HepG2 (cell line): ENCODE measurements at regions of chr9 and their contacts with region 1.

Region 1: DNA sequence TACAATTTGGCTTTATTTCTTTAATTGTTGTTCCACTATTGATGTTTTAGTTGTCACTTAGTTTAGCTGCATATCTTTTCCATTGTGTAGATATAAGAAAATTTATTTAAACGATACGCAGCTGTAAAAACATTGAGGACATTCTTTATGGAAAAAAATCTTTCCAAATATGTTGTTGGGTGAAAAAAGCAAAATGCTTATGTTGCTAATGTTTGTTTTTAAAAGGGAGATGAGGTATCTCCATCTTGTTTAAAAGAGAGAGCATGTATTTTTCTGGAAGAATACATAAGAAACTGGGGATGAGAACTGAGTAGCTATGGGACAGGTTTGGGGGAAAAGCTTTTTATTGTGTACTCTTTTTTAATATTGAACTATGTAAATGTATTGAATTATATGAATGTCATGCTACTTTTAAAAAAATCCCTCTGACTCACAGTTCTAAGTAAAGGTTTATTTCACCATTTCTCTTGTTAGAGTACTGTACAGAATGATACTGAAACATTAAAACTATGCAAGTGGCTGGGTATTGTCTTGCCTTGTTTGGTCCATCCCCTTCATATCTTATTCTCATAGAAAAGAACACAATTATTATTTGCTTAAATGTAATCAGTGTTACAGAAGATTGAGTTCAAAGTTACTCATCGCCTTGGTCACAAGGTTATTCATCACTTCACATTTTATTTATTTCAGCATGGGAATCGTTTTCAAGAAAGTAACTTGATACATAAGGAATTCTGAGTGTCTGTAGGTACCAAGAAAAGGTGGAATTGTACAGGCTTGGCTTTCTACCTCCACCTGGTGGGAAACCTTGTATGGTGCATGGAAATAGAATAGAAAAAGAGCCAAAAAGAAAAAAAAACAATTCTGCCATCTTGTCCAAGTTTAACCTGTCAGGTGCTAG is 85.8 kb downstream of the RIC1 start:
- DNase-seq: peak; percentile 25
- ATAC-seq: peak; percentile 51
- H3K4me3 ChIP-seq: no peak overlapping the region
- H3K27ac ChIP-seq: no peak overlapping the region
- H3K4me1 ChIP-seq: peaks cover 38% of the 10 kb centered on the region
- H3K27me3 ChIP-seq: no peaks in the 10 kb centered on the region
- CTCF ChIP-seq: peak; percentile 35
- EP300 ChIP-seq: no peak
- POLR2A ChIP-seq: no peak
- RAD21 ChIP-seq: peak; percentile 21; the same call in 1 of the 2 replicates

Region 2: GRCh38 chr9:5608298-5609225 is 106.2 kb before region 1 on chr9:
- CTCF ChIA-PET with region 1: no interaction called
- POLR2A ChIA-PET with region 1: no interaction called
- in situ Hi-C with region 1: no loop called
- intact Hi-C with region 1: loop called (anchors 10 kb)
- DNase-seq: peak; percentile 49
- ATAC-seq: peak; percentile 99
- H3K4me3 ChIP-seq: peak overlapping the region; percentile 52 to 76 (median 66)
- H3K27ac ChIP-seq: peak overlapping the region; percentile 5
- H3K4me1 ChIP-seq: peaks cover 5% of the 10 kb centered on the region
- H3K27me3 ChIP-seq: no peaks in the 10 kb centered on the region
- CTCF ChIP-seq: peak; percentile 58
- EP300 ChIP-seq: no peak
- POLR2A ChIP-seq: no peak
- RAD21 ChIP-seq: no peak

Region 3: GRCh38 chr9:5825223-5825622 is 110.5 kb after region 1 on chr9:
- CTCF ChIA-PET with region 1: no interaction called
- POLR2A ChIA-PET with region 1: no interaction called
- in situ Hi-C with region 1: no loop called
- intact Hi-C with region 1: no loop called
- DNase-seq: no peak
- ATAC-seq: no peak
- H3K4me3 ChIP-seq: no peak overlapping the region
- H3K27ac ChIP-seq: no peak overlapping the region
- H3K4me1 ChIP-seq: peaks cover 53% of the 10 kb centered on the region
- H3K27me3 ChIP-seq: no peaks in the 10 kb centered on the region
- CTCF ChIP-seq: no peak
- EP300 ChIP-seq: no peak
- POLR2A ChIP-seq: no peak
- RAD21 ChIP-seq: no peak